ENCODE measurements at regions of chr1 and their contacts with region 1.

Region 1: GRCh38 chr1:45512641-45513054 is 9.0 kb downstream of the PRDX1 start:
- DNase-seq: peak; percentile 42 to 60 (median 47)
- H3K4me3 ChIP-seq: no peak overlapping the region
- H3K4me3 Mint-ChIP-seq: no peak overlapping the region
- H3K27ac ChIP-seq: no peak overlapping the region
- H3K27ac Mint-ChIP-seq: peak overlapping the region in 3 of 7 donors; percentile 18 to 68 (median 24)
- H3K4me1 ChIP-seq: no peaks in the 10 kb centered on the region
- H3K4me1 Mint-ChIP-seq: peaks cover 3 to 14% (median 7%) of the 10 kb centered on the region in 4 donors
- H3K27me3 ChIP-seq: no peaks in the 10 kb centered on the region
- H3K27me3 Mint-ChIP-seq: no peaks in the 10 kb centered on the region

Region 2: GRCh38 chr1:45543581-45544417 is 31.2 kb after region 1 on chr1:
- CTCF ChIA-PET with region 1: interaction called, 26 read pairs
- POLR2A ChIA-PET with region 1: interaction called, 3 read pairs
- intact Hi-C with region 1: no loop called
- DNase-seq: peak; percentile 73 to 93 (median 74)
- H3K4me3 ChIP-seq: peak overlapping the region in 1 of 2 donors; percentile 25
- H3K4me3 Mint-ChIP-seq: peak overlapping the region; percentile 26 to 87 (median 74)
- H3K27ac ChIP-seq: peak overlapping the region; percentile 55
- H3K27ac Mint-ChIP-seq: peak overlapping the region; percentile 75 to 98 (median 95)
- H3K4me1 ChIP-seq: peaks cover 31% of the 10 kb centered on the region
- H3K4me1 Mint-ChIP-seq: peaks cover 21 to 36% (median 28%) of the 10 kb centered on the region in 4 donors
- H3K27me3 ChIP-seq: no peaks in the 10 kb centered on the region
- H3K27me3 Mint-ChIP-seq: no peaks in the 10 kb centered on the region

Region 3: GRCh38 chr1:46517010-46517600 is 1004.5 kb after region 1 on chr1:
- CTCF ChIA-PET with region 1: no interaction called
- POLR2A ChIA-PET with region 1: no interaction called
- intact Hi-C with region 1: no loop called
- DNase-seq: no peak
- H3K4me3 ChIP-seq: no peak overlapping the region
- H3K4me3 Mint-ChIP-seq: no peak overlapping the region
- H3K27ac ChIP-seq: no peak overlapping the region
- H3K27ac Mint-ChIP-seq: no peak overlapping the region
- H3K4me1 ChIP-seq: no peaks in the 10 kb centered on the region
- H3K4me1 Mint-ChIP-seq: peaks cover 3 to 4% (median 4%) of the 10 kb centered on the region in 4 donors
- H3K27me3 ChIP-seq: no peaks in the 10 kb centered on the region
- H3K27me3 Mint-ChIP-seq: peaks cover 21 to 35% of the 10 kb centered on the region in 2 donors